ENCODE measurements at regions of chr6 and their contacts with region 1.

Region 1: DNA sequence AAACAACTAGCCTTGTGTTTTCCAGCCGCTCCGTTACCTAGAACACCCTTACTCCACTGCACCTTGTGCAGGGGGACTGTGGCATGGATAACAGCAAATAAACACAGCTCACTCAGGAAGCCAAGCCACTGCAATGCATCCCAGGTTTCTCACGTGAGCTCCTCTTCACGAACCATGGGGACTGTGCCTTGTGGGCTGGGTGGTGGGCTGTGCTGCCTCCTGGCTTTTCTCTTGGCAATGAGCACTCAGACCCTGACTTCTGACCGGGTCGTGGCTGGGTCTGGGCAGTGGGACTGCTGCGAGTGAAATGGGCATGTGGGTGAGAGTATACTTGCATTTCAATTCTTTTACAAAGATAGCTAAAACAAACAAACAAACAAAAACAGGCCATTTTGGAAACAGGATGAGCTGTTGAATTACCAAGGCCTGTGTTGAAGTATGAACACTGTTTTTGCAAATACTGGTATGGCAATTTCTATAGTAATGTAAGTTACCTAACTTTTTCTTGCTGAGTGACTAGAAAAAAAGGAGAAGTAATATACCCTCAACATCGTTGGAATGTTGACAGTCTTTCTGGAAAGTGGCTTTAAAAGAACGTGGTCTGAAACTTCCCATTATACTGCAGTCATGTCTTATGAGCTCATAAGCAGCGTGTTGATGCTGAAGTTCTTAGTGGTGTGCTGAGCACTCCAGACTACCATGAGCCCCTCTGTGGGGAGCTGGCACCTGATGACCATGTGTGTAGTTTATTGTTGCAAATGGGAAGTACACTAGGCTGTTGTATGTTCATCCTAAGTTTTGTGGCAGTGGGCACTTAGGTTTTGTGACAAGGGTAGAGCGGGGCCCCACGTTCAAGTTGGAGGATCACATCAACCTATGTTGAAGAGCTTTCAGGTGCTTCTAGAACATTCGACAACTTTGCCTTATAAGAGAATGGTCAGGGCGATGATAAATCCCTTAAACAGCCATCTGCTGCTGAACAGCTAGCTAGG is 120.4 kb downstream of the ARMC2 start:
- DNase-seq: no peak

Region 2: DNA sequence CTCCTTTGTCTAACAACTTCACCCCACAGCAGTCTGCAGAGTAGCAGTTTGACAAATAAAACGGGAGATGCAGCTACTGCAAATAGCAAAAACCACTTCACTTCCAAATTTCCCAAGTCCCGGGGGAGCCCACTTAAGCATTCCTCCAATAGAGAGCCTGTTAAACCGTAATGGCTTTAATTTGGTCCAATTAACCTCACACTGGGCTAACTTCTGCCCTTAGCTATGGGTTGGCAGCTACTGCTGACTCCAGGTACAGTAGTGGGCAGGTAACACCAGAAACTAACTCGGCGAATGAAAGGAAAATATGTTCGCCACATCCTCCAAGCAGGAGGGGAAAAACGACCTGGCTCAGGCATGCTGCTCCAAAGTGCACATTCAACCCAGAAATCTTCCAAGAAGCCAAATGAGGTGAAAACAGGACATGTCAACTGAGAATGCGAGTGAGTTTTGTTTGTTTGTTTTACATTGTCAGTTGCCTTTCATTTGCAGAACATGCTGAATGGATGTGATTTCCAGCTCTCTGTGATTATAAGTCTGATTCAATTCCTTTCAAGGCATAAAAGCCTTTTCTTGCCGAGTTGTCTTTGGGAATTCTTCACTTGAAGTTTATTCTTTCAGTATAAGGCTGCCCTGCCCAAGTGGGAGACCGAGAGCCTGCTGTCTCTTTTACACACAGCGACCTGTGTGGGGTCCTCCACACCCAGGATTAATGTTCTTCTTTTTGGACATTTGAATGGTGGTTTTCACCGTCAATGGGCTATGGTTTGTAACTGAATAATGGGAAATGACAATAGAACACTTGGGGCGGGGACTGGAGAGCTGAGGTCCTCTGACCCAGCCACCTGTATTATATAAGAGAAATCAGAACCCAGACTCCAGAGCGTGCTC is 237.7 kb before region 1 on chr6:
- CTCF ChIA-PET with region 1: no interaction called
- POLR2A ChIA-PET with region 1: no interaction called
- DNase-seq: no peak

Region 3: GRCh38 chr6:108914235-108915022 is 54.2 kb before region 1 on chr6:
- CTCF ChIA-PET with region 1: interaction called, 10 read pairs
- POLR2A ChIA-PET with region 1: no interaction called
- DNase-seq: peak; percentile 65

Region 4: GRCh38 chr6:109229536-109229935 is 260.9 kb after region 1 on chr6:
- CTCF ChIA-PET with region 1: no interaction called
- POLR2A ChIA-PET with region 1: no interaction called
- DNase-seq: no peak